HCT116 (cell line): ENCODE measurements at regions of chr11 and their contacts with region 1.

Region 1: DNA sequence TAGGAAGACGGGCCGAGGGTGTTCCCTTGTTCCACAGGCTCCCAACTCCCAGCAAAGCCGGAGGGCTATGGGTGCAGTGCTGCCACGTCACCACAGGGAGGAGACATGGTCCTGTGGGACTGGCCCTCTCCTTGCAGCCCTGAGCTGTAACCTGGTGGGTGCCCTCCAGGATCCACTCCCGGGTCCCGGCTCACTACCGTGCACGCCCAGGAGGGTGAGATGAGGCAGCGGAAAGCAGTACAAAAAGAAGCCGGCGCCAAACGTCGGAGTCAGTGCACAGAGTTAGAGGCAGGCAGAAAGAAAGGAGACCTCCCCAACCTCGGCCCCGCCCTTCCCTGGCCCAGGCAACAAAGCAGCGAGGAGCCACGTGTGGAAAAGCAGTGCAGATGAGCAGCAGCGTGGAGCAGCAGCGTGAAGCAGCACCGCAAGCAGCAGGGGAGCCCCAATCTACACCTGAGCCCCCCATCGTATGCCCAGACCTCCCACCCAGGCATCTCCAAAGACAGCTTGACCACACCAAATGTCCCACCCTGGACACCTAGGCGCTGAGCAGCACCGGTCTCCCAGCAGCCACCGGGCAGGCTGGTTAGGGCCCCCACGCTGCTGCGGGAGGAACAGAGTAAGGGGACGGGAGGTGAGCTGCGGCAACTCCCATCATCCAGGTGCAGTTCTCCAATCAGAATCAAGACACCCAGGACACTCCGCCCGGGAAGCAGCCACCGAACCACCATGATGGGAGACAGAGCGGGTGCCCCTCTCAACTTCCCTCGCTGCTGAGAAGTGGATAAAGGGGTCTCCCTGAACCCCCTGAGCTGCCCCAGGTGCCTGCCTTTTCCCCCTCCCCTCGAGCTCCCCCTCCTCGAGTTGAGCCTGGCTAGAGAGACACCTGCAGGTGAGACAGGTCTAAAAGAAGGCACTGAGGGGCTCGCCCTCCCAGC is 28.8 kb downstream of the IGSF9B start:
- DNase-seq: no peak
- ATAC-seq: peak; percentile 90
- H3K4me3 ChIP-seq: no peak overlapping the region
- H3K27ac ChIP-seq: no peak overlapping the region
- H3K4me1 ChIP-seq: peaks cover 0 to 11% of the 10 kb centered on the region in 2 experiments; a peak in 2 of 4 replicates
- H3K27me3 ChIP-seq: no peaks in the 10 kb centered on the region
- CTCF ChIP-seq: peak; percentile 59 to 84 (median 83); a peak in 5 of 6 replicates
- POLR2A ChIP-seq: no peak
- RAD21 ChIP-seq: peak; percentile 90

Region 2: GRCh38 chr11:133938166-133938565 is 10.2 kb after region 1 on chr11:
- CTCF ChIA-PET with region 1: no interaction called
- POLR2A ChIA-PET with region 1: no interaction called
- RAD21 ChIA-PET with region 1: no interaction called
- intact Hi-C with region 1: no loop called
- DNase-seq: no peak
- ATAC-seq: no peak
- H3K4me3 ChIP-seq: no peak overlapping the region
- H3K27ac ChIP-seq: no peak overlapping the region
- H3K4me1 ChIP-seq: peaks cover 5 to 18% of the 10 kb centered on the region in 2 experiments; a peak in 3 of 4 replicates
- H3K27me3 ChIP-seq: no peaks in the 10 kb centered on the region
- CTCF ChIP-seq: no peak
- POLR2A ChIP-seq: no peak
- RAD21 ChIP-seq: no peak

Region 3: GRCh38 chr11:134050541-134051383 is 122.8 kb after region 1 on chr11:
- CTCF ChIA-PET with region 1: interaction called, 13 read pairs
- POLR2A ChIA-PET with region 1: no interaction called
- RAD21 ChIA-PET with region 1: interaction called, 4 to 8 read pairs
- intact Hi-C with region 1: loop called (anchors 5 kb)
- DNase-seq: peak; percentile 33
- ATAC-seq: peak; percentile 94
- H3K4me3 ChIP-seq: no peak overlapping the region; a peak in 1 of 4 replicates
- H3K27ac ChIP-seq: no peak overlapping the region
- H3K4me1 ChIP-seq: peaks cover 0 to 8% of the 10 kb centered on the region in 2 experiments; a peak in 1 of 4 replicates
- H3K27me3 ChIP-seq: 0 out of 2 replicates have a peak, but pooled peaks cover 7% of the 10 kb centered on the region
- CTCF ChIP-seq: peak; percentile 82 to 88 (median 84); a peak in 5 of 6 replicates
- POLR2A ChIP-seq: no peak
- RAD21 ChIP-seq: peak; percentile 89

Region 4: DNA sequence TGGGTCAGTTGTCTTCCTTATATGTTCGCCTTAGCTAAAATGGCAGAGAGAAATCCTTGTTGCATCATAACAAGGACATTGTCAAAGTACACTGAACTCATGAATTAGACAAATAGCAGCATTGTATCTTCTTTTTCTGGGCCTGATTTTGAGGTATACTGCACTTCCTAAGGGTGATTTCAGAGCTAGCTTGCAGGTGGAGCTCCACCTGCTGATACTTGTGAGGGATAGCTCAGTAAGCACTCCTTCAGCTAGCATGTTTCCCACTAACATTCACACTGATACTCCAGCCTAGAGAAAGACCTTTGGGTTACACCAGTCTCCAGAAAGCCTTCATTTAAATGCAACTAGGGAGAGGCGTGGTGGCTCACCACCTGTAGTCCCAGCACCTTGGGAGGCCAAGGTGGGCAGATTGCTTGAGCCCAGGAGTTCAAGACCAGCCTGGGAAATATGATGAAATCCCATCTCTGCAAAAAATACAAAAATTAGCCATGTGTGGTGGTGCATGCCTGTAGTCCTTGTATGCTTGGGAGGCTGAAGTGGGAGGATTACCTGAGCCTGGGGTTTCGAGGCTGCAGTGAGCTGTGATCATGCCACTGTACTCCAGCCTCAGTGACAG is 170.7 kb after region 1 on chr11:
- CTCF ChIA-PET with region 1: interaction called, 21 read pairs
- POLR2A ChIA-PET with region 1: no interaction called
- RAD21 ChIA-PET with region 1: no interaction called
- intact Hi-C with region 1: loop called (anchors 1 kb)
- DNase-seq: peak; percentile 27
- ATAC-seq: peak; percentile 97
- H3K4me3 ChIP-seq: no peak overlapping the region
- H3K27ac ChIP-seq: no peak overlapping the region
- H3K4me1 ChIP-seq: no peaks in the 10 kb centered on the region
- H3K27me3 ChIP-seq: peaks cover 22% of the 10 kb centered on the region; the same call in 1 of the 2 replicates
- CTCF ChIP-seq: peak; percentile 50 to 57 (median 53); a peak in 5 of 6 replicates
- POLR2A ChIP-seq: no peak
- RAD21 ChIP-seq: peak; percentile 49

Region 5: GRCh38 chr11:134139873-134140331 is 211.9 kb after region 1 on chr11:
- CTCF ChIA-PET with region 1: interaction called, 6 read pairs
- POLR2A ChIA-PET with region 1: no interaction called
- RAD21 ChIA-PET with region 1: no interaction called
- intact Hi-C with region 1: loop called (anchors 1 kb)
- DNase-seq: peak; percentile 62
- ATAC-seq: peak; percentile 96
- H3K4me3 ChIP-seq: no peak overlapping the region
- H3K27ac ChIP-seq: no peak overlapping the region
- H3K4me1 ChIP-seq: no peaks in the 10 kb centered on the region; a peak in 1 of 4 replicates
- H3K27me3 ChIP-seq: peaks cover 13% of the 10 kb centered on the region
- CTCF ChIP-seq: peak; percentile 74 to 84 (median 83); a peak in 5 of 6 replicates
- POLR2A ChIP-seq: no peak
- RAD21 ChIP-seq: peak; percentile 82

Region 6: GRCh38 chr11:134253188-134253993 is 325.4 kb after region 1 on chr11 and contains the starts of genes ACAD8 and THYN1:
- CTCF ChIA-PET with region 1: no interaction called
- POLR2A ChIA-PET with region 1: no interaction called
- RAD21 ChIA-PET with region 1: no interaction called
- intact Hi-C with region 1: loop called (anchors 10 kb)
- DNase-seq: peak; percentile 90
- ATAC-seq: peak; percentile 99
- H3K4me3 ChIP-seq: peak within 1 kb of the TSS; percentile 73 to 79
- H3K27ac ChIP-seq: peak within 1 kb of the TSS; percentile 47; the same call in 1 of the 2 replicates
- H3K4me1 ChIP-seq: peaks cover 2 to 9% of the 10 kb centered on the region in 2 experiments; a peak in 2 of 4 replicates
- H3K27me3 ChIP-seq: no peaks in the 10 kb centered on the region
- CTCF ChIP-seq: no peak
- POLR2A ChIP-seq: peak; percentile 86
- RAD21 ChIP-seq: no peak
- total RNA-seq, gene ACAD8: 21.0 TPM
- total RNA-seq, gene THYN1: 32.2 TPM